ENCODE measurements at regions of chr21 and their contacts with region 1.

Region 1: GRCh38 chr21:29372063-29372802 is 73.5 kb downstream of the BACH1 start:
- DNase-seq: no peak
- ATAC-seq: peak; percentile 93
- H3K4me3 ChIP-seq: no peak overlapping the region
- H3K27ac ChIP-seq: no peak overlapping the region
- H3K4me1 ChIP-seq: no peaks in the 10 kb centered on the region
- H3K27me3 ChIP-seq: no peaks in the 10 kb centered on the region
- CTCF ChIP-seq: peak; percentile 75

Region 2: GRCh38 chr21:29091032-29091431 is 281.2 kb before region 1 on chr21:
- intact Hi-C with region 1: loop called (anchors 5 kb)
- DNase-seq: no peak
- ATAC-seq: no peak
- H3K4me3 ChIP-seq: no peak overlapping the region
- H3K27ac ChIP-seq: no peak overlapping the region
- H3K4me1 ChIP-seq: no peaks in the 10 kb centered on the region
- H3K27me3 ChIP-seq: no peaks in the 10 kb centered on the region
- CTCF ChIP-seq: no peak

Measured in upper lobe of right lung (tissue), 1 donor.